ENCODE measurements at regions of chr16 and their contacts with region 1.

Region 1: GRCh38 chr16:2486645-2487516 is 12.0 kb downstream of the TBC1D24 start:
- DNase-seq: peak; percentile 41 to 53
- ATAC-seq: no peak
- H3K4me3 ChIP-seq: no peak overlapping the region
- H3K27ac ChIP-seq: no peak overlapping the region
- H3K4me1 ChIP-seq: peaks cover 23 to 53% of the 10 kb centered on the region in 2 donors
- H3K27me3 ChIP-seq: no peaks in the 10 kb centered on the region
- CTCF ChIP-seq: peak in 1 of 5 experiments; percentile 34
- POLR2A ChIP-seq: no peak

Region 2: GRCh38 chr16:2288726-2289125 is 198.2 kb before region 1 on chr16:
- in situ Hi-C with region 1: no loop called
- intact Hi-C with region 1: no loop called
- DNase-seq: no peak
- ATAC-seq: no peak
- H3K4me3 ChIP-seq: no peak overlapping the region
- H3K27ac ChIP-seq: no peak overlapping the region
- H3K4me1 ChIP-seq: no peaks in the 10 kb centered on the region
- H3K27me3 ChIP-seq: no peaks in the 10 kb centered on the region
- CTCF ChIP-seq: no peak
- POLR2A ChIP-seq: no peak

Region 3: GRCh38 chr16:2429034-2429770 is 57.7 kb before region 1 on chr16 and contains the start of gene CCNF:
- in situ Hi-C with region 1: no loop called
- intact Hi-C with region 1: loop called (anchors 10 kb)
- DNase-seq: peak; percentile 96 to 97
- ATAC-seq: peak; percentile 95 to 97
- H3K4me3 ChIP-seq: peak within 1 kb of the TSS; percentile 64 to 97 (median 87)
- H3K27ac ChIP-seq: peak within 1 kb of the TSS; percentile 73 to 78 (median 76)
- H3K4me1 ChIP-seq: peaks cover 6 to 8% of the 10 kb centered on the region in 2 donors
- H3K27me3 ChIP-seq: no peaks in the 10 kb centered on the region
- CTCF ChIP-seq: peak in 2 of 5 experiments; percentile 26 to 35
- POLR2A ChIP-seq: peak; percentile 51 to 52
- total RNA-seq, gene CCNF: 1.8 to 3.6 (median 2.4) TPM

Region 4: GRCh38 chr16:2467521-2468151 is 19.2 kb before region 1 on chr16:
- in situ Hi-C with region 1: no loop called
- intact Hi-C with region 1: loop called (anchors 1 kb)
- DNase-seq: peak; percentile 40 to 72
- ATAC-seq: peak; percentile 57 to 62
- H3K4me3 ChIP-seq: peak overlapping the region; percentile 37 to 59 (median 48)
- H3K27ac ChIP-seq: peak overlapping the region in 1 of 4 donors; percentile 32
- H3K4me1 ChIP-seq: peaks cover 20 to 34% of the 10 kb centered on the region in 2 donors
- H3K27me3 ChIP-seq: peaks cover 28 to 37% (median 33%) of the 10 kb centered on the region in 3 donors
- CTCF ChIP-seq: no peak
- POLR2A ChIP-seq: peak; percentile 53 to 69

Region 5: DNA sequence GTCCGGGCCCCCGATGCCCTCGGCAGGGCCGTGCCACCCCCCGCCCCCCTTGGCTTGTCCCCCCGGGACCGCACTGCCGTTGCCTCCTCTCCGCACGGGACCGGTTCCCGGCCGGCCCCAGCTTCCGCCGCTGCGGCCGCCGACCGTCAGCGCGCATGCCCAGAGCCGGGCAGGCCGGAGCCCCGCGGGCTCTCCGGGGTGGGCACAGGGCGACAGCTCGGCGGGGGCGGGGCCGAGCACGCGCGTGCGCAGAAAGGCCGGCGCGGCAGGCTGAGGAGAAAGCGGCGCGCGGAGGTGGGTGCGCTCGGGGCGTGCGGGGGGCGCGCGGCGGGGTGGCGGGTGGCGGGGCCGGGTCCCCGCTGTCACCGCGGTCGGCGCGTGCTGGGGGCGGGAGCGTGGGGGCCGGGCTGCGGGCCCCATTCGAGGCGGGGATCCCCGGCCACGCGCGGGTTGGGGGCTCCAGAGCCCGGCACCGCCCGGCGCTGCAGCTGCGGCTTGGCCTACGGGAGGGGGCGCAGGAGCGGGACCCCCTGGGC is 11.9 kb before region 1 on chr16 and contains the start of gene TBC1D24:
- in situ Hi-C with region 1: no loop called
- intact Hi-C with region 1: loop called (anchors 2 kb)
- DNase-seq: peak; percentile 63 to 84
- ATAC-seq: peak; percentile 83 to 90
- H3K4me3 ChIP-seq: peak within 1 kb of the TSS; percentile 66 to 87 (median 72)
- H3K27ac ChIP-seq: peak within 1 kb of the TSS; percentile 81 to 91 (median 86)
- H3K4me1 ChIP-seq: peaks cover 14 to 24% of the 10 kb centered on the region in 2 donors
- H3K27me3 ChIP-seq: peaks cover 30 to 32% (median 31%) of the 10 kb centered on the region in 3 donors
- CTCF ChIP-seq: no peak
- POLR2A ChIP-seq: peak; percentile 84 to 91
- total RNA-seq, gene TBC1D24: 8.7 to 14.8 (median 9.9) TPM

Region 6: GRCh38 chr16:2584750-2585650 is 98.1 kb after region 1 on chr16:
- in situ Hi-C with region 1: no loop called
- intact Hi-C with region 1: no loop called
- DNase-seq: peak; percentile 72 to 91
- ATAC-seq: peak; percentile 90 to 96
- H3K4me3 ChIP-seq: no peak overlapping the region
- H3K27ac ChIP-seq: peak overlapping the region; percentile 21 to 73 (median 43)
- H3K4me1 ChIP-seq: peaks cover 14 to 15% of the 10 kb centered on the region in 2 donors
- H3K27me3 ChIP-seq: no peaks in the 10 kb centered on the region
- CTCF ChIP-seq: no peak
- POLR2A ChIP-seq: no peak